ENCODE measurements at regions of chr1 and their contacts with region 1.

Region 1: GRCh38 chr1:234989479-234990327 is 138.9 kb downstream of the TOMM20 start:
- DNase-seq: no peak
- ATAC-seq: no peak
- H3K4me3 ChIP-seq: no peak overlapping the region
- H3K27ac ChIP-seq: peak overlapping the region in 2 of 4 donors; percentile 29 to 91
- H3K4me1 ChIP-seq: peaks cover 21 to 35% of the 10 kb centered on the region in 2 donors
- H3K27me3 ChIP-seq: no peaks in the 10 kb centered on the region
- CTCF ChIP-seq: no peak
- POLR2A ChIP-seq: no peak

Region 2: GRCh38 chr1:235067263-235068172 is 77.8 kb after region 1 on chr1:
- in situ Hi-C with region 1: loop called in 2 of 4 experiments (anchors 5 to 10 kb)
- intact Hi-C with region 1: no loop called
- DNase-seq: peak; percentile 92 to 96
- ATAC-seq: peak; percentile 77 to 82
- H3K4me3 ChIP-seq: no peak overlapping the region
- H3K27ac ChIP-seq: peak overlapping the region; percentile 87 to 100 (median 90)
- H3K4me1 ChIP-seq: peaks cover 53 to 58% of the 10 kb centered on the region in 2 donors
- H3K27me3 ChIP-seq: no peaks in the 10 kb centered on the region
- CTCF ChIP-seq: no peak
- POLR2A ChIP-seq: peak; percentile 40 to 54

Region 3: GRCh38 chr1:235136111-235136510 is 146.4 kb after region 1 on chr1:
- in situ Hi-C with region 1: no loop called
- intact Hi-C with region 1: no loop called
- DNase-seq: no peak
- ATAC-seq: no peak
- H3K4me3 ChIP-seq: no peak overlapping the region
- H3K27ac ChIP-seq: no peak overlapping the region
- H3K4me1 ChIP-seq: no peaks in the 10 kb centered on the region
- H3K27me3 ChIP-seq: no peaks in the 10 kb centered on the region
- CTCF ChIP-seq: no peak
- POLR2A ChIP-seq: no peak

Measured in gastrocnemius medialis (tissue), 4 donors.